ENCODE measurements at regions of chr3 and their contacts with region 1.

Region 1: DNA sequence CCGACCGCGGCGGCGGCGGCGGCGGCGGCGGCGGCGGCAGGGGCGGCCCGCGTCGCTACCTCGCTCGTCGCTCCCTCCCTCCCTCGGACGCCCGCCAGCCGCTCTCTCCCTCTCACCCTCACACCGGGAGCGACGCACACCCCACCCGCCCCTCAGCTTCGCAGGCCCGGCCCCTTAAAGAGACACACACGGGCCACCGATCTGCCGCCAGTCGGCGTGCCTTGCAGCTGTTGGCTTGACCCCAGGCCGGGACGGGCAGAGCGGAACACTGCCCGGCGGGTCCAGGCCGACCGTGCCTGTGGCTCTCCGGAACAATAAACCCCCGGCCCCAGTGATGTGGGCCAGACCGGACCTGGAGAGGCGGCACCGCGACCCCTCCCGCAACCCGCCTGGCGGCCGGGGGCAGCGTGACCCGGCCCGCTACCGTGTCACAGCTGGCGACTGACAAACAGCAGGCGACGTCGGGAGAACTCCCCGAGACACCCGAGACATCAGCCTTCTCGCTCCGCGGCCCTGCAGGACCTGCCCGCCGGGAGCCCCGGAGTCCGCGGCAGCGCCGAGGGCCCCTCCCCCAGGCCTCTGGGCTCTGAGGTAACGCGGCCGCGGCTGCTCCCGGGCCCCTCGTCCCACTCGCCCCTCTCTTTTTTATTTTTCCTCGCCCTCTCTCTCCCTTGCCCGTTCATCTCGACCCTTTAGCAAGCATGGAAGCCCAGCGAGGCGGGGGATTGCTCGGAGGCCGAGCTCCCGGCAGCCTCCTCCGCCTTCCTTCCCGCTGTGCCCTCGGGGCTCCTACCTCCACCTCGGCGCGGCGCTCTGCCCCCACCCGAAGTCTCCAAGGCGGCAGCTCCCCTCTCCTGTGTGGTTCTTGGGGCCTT is at the start of gene SETD2:
- DNase-seq: peak; percentile 81 to 87
- H3K4me3 ChIP-seq: peak within 1 kb of the TSS; percentile 56 to 91 (median 81)
- H3K27ac ChIP-seq: peak within 1 kb of the TSS; percentile 76
- H3K4me1 ChIP-seq: peaks cover 0 to 7% (median 4%) of the 10 kb centered on the region in 4 experiments; a peak in 3 of 7 replicates
- H3K27me3 ChIP-seq: no peaks in the 10 kb centered on the region
- CTCF ChIP-seq: peak; percentile 20 to 33 (median 31)
- EP300 ChIP-seq: no peak; a peak in 1 of 3 replicates
- POLR2A ChIP-seq: peak; percentile 17 to 77
- RAD21 ChIP-seq: peak; percentile 39 to 50; a peak in 3 of 4 replicates
- total RNA-seq, gene SETD2: 44.6 and 46.3 TPM in 2 replicates

Region 2: GRCh38 chr3:47152578-47152977 is 11.7 kb before region 1 on chr3:
- CTCF ChIA-PET with region 1: interaction called, 4 read pairs
- POLR2A ChIA-PET with region 1: interaction called, 13 read pairs
- DNase-seq: peak in 1 of 2 experiments; percentile 45
- H3K4me3 ChIP-seq: no peak overlapping the region
- H3K27ac ChIP-seq: no peak overlapping the region
- H3K4me1 ChIP-seq: peaks cover 2 to 3% (median 2%) of the 10 kb centered on the region in 4 experiments; a peak in 4 of 7 replicates
- H3K27me3 ChIP-seq: no peaks in the 10 kb centered on the region
- CTCF ChIP-seq: no peak
- EP300 ChIP-seq: no peak
- POLR2A ChIP-seq: no peak
- RAD21 ChIP-seq: no peak

Region 3: DNA sequence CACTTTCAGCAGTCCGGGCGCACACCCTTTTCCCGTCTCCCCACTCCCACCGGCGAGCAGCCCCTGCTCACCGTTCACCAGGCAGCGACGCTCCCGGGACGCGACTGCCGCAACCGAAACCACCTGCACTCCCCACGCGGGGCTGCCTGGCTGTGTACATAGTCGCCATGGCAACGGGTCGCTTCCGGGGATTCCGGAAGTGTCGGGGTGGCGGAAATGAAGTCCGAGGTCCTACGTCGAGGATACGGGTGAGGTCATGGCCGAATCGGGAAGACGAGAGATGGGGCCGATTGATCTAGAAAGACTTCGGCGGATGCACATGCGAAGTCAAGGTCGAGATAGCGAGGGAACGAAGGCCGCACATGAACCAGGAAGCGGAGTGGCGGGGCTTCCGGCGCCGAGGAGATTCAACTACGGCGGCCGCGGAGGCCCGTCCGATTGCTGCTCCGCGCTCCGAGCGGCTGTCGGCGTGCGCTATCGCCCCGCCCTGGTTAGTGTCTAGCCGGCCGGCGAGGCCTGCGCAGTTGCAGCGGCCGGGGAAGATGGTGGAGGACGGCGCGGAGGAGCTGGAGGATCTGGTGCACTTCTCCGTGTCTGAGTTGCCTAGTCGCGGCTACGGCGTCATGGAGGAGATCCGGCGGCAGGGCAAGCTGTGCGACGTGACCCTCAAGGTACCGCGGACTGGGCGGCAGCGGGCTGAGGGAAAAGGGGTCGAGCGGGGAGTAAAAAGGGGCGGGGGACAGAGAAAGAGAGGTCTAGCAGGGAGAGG is 118.4 kb after region 1 on chr3 and contains the starts of genes KIF9 and KLHL18:
- CTCF ChIA-PET with region 1: no interaction called
- POLR2A ChIA-PET with region 1: interaction called, 11 read pairs
- DNase-seq: peak; percentile 39 to 92
- H3K4me3 ChIP-seq: peak within 1 kb of the TSS; percentile 82 to 98 (median 90)
- H3K27ac ChIP-seq: peak within 1 kb of the TSS; percentile 83
- H3K4me1 ChIP-seq: peaks cover 0 to 4% (median under 1%) of the 10 kb centered on the region in 4 experiments; a peak in 3 of 7 replicates
- H3K27me3 ChIP-seq: no peaks in the 10 kb centered on the region
- CTCF ChIP-seq: no peak
- EP300 ChIP-seq: no peak; a peak in 1 of 3 replicates
- POLR2A ChIP-seq: peak; percentile 64 to 77
- RAD21 ChIP-seq: no peak; a peak in 1 of 4 replicates
- total RNA-seq, gene KIF9: 6.8 and 8.0 TPM in 2 replicates
- total RNA-seq, gene KLHL18: 30.9 and 31.7 TPM in 2 replicates

Measured in H1 (cell line).